Esophagus muscularis mucosa (tissue), 4 donors: ENCODE measurements at regions of chr1 and their contacts with region 1.

Region 1: GRCh38 chr1:91282695-91283420 is 121.8 kb downstream of the HFM1 start:
- DNase-seq: no peak
- H3K4me3 ChIP-seq: peak overlapping the region; percentile 5 to 24 (median 14)
- H3K27ac ChIP-seq: no peak overlapping the region
- H3K4me1 ChIP-seq: peaks cover 0 to 9% (median 3%) of the 10 kb centered on the region in 4 donors
- H3K27me3 ChIP-seq: no peaks in the 10 kb centered on the region
- CTCF ChIP-seq: peak; percentile 80 to 83 (median 82)
- EP300 ChIP-seq: no peak
- POLR2A ChIP-seq: no peak

Region 2: GRCh38 chr1:91404151-91405012 is 121.5 kb after region 1 on chr1 and contains the start of gene HFM1:
- intact Hi-C with region 1: loop called (anchors 2 kb)
- DNase-seq: no peak
- H3K4me3 ChIP-seq: peak within 1 kb of the TSS; percentile 63 to 77 (median 68)
- H3K27ac ChIP-seq: peak within 1 kb of the TSS; percentile 85 to 89 (median 86)
- H3K4me1 ChIP-seq: peaks cover 0 to 16% (median 9%) of the 10 kb centered on the region in 4 donors
- H3K27me3 ChIP-seq: no peaks in the 10 kb centered on the region
- CTCF ChIP-seq: peak in 2 of 3 experiments; percentile 2 to 8
- EP300 ChIP-seq: no peak
- POLR2A ChIP-seq: no peak
- total RNA-seq, gene HFM1: 0.42 to 2.2 (median 1.5) TPM

Region 3: DNA sequence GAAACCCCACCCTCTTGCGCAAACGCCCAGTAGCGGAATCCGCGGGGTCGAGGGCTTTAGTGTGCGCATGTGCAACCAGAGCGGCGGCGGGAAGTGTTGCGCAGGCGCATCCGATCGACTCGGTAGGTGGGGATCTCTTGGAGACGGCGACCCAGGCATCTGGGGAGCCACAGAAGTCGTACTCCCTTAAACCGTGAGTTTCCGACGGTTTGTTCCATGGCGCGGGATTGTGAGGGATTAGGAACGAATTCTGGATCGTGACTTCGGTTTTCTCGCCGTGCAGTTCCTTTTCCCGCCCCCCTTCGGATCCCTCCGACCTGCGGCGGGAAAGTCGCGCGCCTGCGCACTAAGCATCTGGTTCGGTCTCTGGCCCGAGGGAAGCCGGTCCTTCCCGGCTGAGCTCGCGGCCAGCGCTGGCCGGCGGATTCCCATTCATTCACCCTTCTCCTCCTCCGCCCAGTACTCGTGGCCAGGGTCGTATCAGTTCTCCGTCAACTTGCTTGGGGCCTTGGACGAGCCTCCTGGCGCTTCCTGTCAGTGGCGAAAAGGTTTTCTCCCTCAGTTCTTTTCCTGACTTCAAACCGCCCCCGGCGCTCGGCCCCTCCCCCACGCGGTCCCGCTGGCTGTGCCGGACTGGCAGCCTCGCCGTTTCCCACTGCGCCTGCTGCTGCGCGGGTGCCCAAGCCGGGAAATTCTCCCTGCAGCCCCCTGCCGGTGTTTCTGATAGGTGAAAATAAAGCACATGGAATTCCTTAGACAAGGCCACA is 218.1 kb after region 1 on chr1 and contains the start of gene CDC7:
- intact Hi-C with region 1: loop called (anchors 5 kb)
- DNase-seq: peak; percentile 96
- H3K4me3 ChIP-seq: peak within 1 kb of the TSS; percentile 66 to 91 (median 72)
- H3K27ac ChIP-seq: peak within 1 kb of the TSS; percentile 76 to 93 (median 89)
- H3K4me1 ChIP-seq: peaks cover 17 to 19% (median 17%) of the 10 kb centered on the region in 4 donors
- H3K27me3 ChIP-seq: no peaks in the 10 kb centered on the region
- CTCF ChIP-seq: peak; percentile 3 to 30 (median 29)
- EP300 ChIP-seq: peak; percentile 52
- POLR2A ChIP-seq: peak; percentile 10
- total RNA-seq, gene CDC7: 0.71 to 2.8 (median 1.1) TPM

Region 4: GRCh38 chr1:91553200-91553621 is 270.4 kb after region 1 on chr1:
- intact Hi-C with region 1: no loop called
- DNase-seq: peak; percentile 83
- H3K4me3 ChIP-seq: no peak overlapping the region
- H3K27ac ChIP-seq: peak overlapping the region in 2 of 4 donors; percentile 15
- H3K4me1 ChIP-seq: peaks cover 4 to 46% (median 22%) of the 10 kb centered on the region in 4 donors
- H3K27me3 ChIP-seq: no peaks in the 10 kb centered on the region
- CTCF ChIP-seq: no peak
- EP300 ChIP-seq: no peak
- POLR2A ChIP-seq: no peak

Region 5: DNA sequence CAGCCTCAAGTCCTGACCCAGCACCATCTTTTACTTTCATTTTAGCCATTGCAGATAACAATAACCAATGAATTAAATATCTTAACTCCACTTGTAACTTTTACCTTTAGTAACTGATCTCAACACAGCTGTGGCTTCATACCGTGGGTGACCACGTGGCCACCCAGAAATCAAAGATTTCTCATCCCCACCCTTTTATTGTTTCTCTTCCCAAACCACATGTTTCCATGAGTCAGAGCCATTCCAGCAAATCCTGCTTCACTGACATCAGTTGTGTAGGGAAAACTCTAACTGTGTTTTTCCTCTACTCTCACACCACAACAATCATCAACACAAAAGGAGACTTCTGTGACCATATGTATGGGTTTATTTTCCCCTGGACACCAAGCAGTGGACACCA is 641.3 kb after region 1 on chr1:
- intact Hi-C with region 1: loop called (anchors 10 kb)
- DNase-seq: no peak
- H3K4me3 ChIP-seq: no peak overlapping the region
- H3K27ac ChIP-seq: no peak overlapping the region
- H3K4me1 ChIP-seq: peaks cover 0 to 10% (median 3%) of the 10 kb centered on the region in 4 donors
- H3K27me3 ChIP-seq: no peaks in the 10 kb centered on the region
- CTCF ChIP-seq: no peak
- EP300 ChIP-seq: no peak
- POLR2A ChIP-seq: no peak